ENCODE measurements at regions of chr10 and their contacts with region 1.

Region 1: DNA sequence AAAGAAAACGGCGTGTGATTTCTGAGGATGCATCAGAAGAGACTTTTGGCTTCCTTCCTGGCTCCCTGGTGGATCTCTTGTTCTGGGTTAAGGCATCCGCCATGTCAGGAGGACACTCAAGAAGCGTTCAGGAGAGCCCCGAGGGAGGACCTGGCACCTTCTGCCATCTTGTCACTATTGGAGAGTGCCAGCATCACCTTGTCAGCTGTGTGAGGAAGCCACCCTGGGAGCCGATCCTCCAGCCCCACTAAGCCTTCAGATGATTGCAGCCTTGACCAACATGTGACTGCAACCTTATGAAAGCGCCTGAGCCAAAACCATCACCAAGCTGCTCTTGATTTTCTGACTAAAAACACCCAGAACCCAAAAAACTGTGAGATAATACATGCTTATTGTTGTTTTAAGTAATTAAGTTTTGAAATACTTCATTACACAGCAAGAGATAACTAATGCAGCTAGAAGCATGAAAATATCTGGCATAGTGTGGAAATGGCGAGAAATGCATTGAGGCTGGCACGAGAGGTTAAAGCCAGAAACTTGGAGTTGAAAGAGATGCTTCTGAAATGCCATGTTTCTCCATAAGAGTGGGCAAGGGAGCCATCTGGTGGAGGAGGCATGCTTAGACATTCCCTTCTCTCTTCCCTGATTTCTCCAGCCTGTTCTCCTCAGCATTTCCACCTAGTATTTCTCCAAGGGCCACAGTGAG is 5.4 kb upstream of the ZFYVE27 start:
- DNase-seq: no peak
- H3K4me3 Mint-ChIP-seq: no peak overlapping the region
- H3K27ac Mint-ChIP-seq: no peak overlapping the region
- H3K4me1 Mint-ChIP-seq: peaks cover 9% of the 10 kb centered on the region
- H3K27me3 Mint-ChIP-seq: no peaks in the 10 kb centered on the region

Region 2: DNA sequence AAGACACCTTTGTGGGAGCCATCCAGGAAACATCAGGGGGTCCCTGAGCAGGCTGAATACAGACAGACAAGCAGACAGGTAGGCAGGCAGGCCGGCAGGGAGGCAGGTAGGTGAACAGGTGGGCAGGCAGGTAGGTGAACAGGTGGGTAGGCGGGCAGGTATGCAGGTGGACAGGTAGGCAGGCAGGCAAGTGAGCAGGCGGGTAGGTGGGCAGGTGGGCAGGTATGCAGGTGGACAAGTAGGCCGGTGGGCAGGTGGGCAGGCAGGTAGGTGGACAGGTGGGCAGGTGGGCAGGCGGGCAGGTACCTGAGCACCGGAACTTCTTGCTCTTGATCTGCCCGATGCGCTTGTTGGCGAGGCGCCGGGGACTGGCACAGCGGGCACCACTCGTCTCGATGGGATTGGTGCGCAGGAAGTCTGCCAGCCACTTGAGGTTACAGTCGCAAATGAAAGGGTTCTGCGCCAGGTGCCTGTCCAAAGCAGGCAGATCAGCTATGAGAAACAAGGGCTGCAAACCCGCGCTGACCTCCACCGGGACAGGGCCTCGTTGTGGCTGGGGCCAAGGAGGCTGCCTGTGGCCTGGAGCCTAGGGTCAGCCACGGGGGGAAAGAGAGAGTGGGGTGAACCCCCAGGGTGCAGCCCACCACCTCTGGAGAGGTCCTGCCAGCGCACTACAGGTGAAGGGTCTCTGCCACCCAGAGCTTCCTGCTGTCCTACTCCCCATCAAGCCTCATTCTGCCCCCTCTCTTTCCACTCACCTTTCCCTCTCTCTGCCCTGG is 682.7 kb before region 1 on chr10:
- intact Hi-C with region 1: no loop called
- DNase-seq: no peak
- H3K4me3 Mint-ChIP-seq: no peak overlapping the region
- H3K27ac Mint-ChIP-seq: no peak overlapping the region
- H3K4me1 Mint-ChIP-seq: no peaks in the 10 kb centered on the region
- H3K27me3 Mint-ChIP-seq: peaks cover 3% of the 10 kb centered on the region

Region 3: GRCh38 chr10:97463363-97464132 is 268.0 kb before region 1 on chr10:
- intact Hi-C with region 1: no loop called
- DNase-seq: no peak
- H3K4me3 Mint-ChIP-seq: no peak overlapping the region
- H3K27ac Mint-ChIP-seq: no peak overlapping the region
- H3K4me1 Mint-ChIP-seq: no peaks in the 10 kb centered on the region
- H3K27me3 Mint-ChIP-seq: no peaks in the 10 kb centered on the region

Region 4: GRCh38 chr10:97543025-97543575 is 188.4 kb before region 1 on chr10:
- intact Hi-C with region 1: no loop called
- DNase-seq: peak; percentile 18
- H3K4me3 Mint-ChIP-seq: no peak overlapping the region
- H3K27ac Mint-ChIP-seq: peak overlapping the region; percentile 43
- H3K4me1 Mint-ChIP-seq: peaks cover 22% of the 10 kb centered on the region
- H3K27me3 Mint-ChIP-seq: no peaks in the 10 kb centered on the region

Region 5: DNA sequence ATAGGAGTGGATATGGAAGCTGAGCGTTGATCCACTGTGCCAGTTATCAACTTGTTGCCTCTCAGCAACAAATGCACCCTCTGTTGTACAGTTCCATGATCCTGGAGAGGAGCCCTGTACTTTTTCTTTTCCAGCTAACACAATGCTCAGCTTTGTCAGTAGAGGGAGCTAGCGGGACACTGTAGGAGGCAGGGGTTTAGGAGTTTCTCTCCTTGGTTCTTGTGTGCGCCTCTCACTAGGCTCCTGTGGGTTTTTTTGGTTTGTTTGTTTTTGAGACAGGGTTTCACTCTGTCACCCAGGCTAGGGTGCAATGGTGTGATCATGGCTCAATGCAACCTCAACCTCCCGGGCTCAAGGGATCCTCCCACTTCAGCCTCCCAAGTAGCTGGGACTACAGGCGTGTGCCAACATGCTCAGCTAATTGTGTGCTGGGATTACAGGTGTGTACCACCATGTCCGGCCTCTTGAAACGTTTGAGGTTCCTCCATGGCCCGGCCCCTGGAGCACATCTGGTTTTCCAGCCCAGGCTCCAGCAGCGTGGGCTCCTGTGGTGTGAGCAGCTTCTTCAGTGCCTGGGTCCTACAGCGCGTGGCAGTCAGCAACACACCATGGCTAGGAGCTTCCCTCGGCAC is 29.9 kb before region 1 on chr10:
- intact Hi-C with region 1: loop called (anchors 2 kb)
- DNase-seq: peak; percentile 34
- H3K4me3 Mint-ChIP-seq: no peak overlapping the region
- H3K27ac Mint-ChIP-seq: no peak overlapping the region
- H3K4me1 Mint-ChIP-seq: no peaks in the 10 kb centered on the region
- H3K27me3 Mint-ChIP-seq: peaks cover 8% of the 10 kb centered on the region

Region 6: GRCh38 chr10:97708976-97709946 is 22.2 kb before region 1 on chr10:
- intact Hi-C with region 1: loop called (anchors 1 kb)
- DNase-seq: no peak
- H3K4me3 Mint-ChIP-seq: no peak overlapping the region
- H3K27ac Mint-ChIP-seq: no peak overlapping the region
- H3K4me1 Mint-ChIP-seq: peaks cover 8% of the 10 kb centered on the region
- H3K27me3 Mint-ChIP-seq: peaks cover 20% of the 10 kb centered on the region

Region 7: DNA sequence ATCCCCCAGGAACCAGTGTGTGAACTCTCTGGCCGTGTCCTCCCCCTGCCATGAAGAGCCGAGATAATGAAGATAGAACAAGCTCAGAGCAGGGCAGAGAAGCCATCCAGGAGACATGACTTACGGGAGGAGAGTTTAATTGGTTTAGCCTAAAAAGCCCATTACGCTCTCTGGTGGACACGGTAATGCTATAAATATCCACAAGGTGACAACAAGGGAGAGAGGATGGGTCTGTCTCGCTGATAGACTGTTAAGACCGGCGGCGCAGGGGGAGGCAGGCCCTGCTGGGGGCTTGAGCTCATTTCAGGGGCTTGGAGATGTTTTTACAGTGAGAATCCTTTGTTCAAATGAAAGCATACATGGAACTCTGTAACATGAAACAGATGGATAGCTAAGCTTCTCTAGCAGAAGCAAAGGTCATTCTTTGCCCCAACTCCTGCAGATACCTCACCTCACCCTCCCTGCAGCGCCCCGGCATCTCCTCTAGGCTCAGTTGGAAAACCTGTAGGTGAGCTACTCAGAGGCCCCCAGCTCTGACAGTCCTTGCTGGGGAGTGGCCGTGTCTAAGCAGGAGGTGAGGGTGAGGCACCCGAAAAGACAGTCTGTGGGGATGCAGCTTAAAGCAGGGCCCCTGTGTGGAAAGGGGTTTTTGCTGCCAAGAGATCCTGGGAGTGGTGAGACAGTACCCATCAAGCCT is 577.3 kb after region 1 on chr10:
- intact Hi-C with region 1: no loop called
- DNase-seq: no peak
- H3K4me3 Mint-ChIP-seq: no peak overlapping the region
- H3K27ac Mint-ChIP-seq: no peak overlapping the region
- H3K4me1 Mint-ChIP-seq: no peaks in the 10 kb centered on the region
- H3K27me3 Mint-ChIP-seq: peaks cover 21% of the 10 kb centered on the region

Measured in activated T-helper 2 cell treated with anti-CD3 and anti-CD28 coated beads, Interferon-gamma antibody, Interleukin-2, Interleukin-4, amounts not matched to agents 10 μg/mL and 5 μg/mL and 100 μg/mL, durations not matched to agents 14 hours and 24 hours and 36 hours (primary cell).